ENCODE measurements at regions of chr5 and their contacts with region 1.

Region 1: DNA sequence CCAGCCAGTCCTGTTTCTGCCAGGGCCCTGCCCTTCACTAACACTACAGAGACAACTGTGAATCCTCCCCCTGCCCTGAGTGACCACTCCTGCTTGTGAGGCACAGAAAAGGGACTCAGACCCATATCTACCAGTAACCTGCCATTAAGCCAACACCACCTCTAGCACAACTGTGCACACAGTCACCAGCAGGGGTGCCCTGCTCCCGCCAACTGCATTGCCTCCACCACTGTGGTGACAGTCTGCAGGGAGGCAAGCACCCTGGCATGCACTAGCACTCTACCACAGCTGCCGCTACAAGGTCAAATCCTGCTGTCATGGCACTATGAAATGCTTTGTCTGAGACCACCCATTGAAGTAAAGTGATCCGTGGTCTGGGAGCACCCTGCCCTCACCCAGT is 1028.5 kb upstream of the CDH9 start:
- DNase-seq: no peak
- H3K4me3 ChIP-seq: no peak overlapping the region
- CTCF ChIP-seq: no peak
- POLR2A ChIP-seq: no peak

Region 2: DNA sequence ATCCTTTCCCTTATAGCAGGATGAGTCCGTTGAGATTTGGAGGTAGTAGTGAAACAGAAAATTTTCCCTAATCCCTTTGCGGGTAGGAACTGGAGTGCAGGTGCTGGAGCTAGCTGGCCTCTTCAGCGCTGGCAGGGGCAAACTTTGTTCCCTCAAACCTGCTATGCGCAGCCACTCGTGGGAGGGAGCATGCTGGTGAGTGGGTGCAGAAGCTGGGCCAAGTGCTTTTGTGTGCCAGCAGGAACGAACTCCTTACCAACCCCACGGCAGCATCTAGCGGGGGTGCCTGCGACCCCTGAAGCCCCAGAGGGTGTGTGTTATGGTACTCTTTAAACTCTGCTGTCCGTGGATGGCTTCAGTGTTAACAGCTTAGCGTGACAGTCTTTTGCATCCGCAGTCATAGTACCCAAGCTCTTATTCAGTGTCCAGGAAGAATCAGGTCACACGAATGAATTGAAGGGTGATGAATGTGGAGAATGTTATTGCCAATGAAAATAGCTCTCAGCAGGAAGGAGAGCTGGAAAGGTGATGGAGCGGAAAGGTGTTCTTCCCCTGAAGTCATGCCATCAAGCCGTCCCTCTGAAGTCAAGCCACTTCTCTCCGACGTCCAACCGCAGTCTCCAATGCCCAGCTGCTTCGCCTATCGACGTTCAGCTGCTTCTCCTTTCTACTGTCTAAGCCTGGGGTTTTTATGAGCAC is 416.6 kb after region 1 on chr5:
- intact Hi-C with region 1: loop called (anchors 5 kb)
- DNase-seq: no peak
- H3K4me3 ChIP-seq: no peak overlapping the region
- CTCF ChIP-seq: no peak
- POLR2A ChIP-seq: no peak